ENCODE measurements at regions of chr10 and their contacts with region 1.

Region 1: DNA sequence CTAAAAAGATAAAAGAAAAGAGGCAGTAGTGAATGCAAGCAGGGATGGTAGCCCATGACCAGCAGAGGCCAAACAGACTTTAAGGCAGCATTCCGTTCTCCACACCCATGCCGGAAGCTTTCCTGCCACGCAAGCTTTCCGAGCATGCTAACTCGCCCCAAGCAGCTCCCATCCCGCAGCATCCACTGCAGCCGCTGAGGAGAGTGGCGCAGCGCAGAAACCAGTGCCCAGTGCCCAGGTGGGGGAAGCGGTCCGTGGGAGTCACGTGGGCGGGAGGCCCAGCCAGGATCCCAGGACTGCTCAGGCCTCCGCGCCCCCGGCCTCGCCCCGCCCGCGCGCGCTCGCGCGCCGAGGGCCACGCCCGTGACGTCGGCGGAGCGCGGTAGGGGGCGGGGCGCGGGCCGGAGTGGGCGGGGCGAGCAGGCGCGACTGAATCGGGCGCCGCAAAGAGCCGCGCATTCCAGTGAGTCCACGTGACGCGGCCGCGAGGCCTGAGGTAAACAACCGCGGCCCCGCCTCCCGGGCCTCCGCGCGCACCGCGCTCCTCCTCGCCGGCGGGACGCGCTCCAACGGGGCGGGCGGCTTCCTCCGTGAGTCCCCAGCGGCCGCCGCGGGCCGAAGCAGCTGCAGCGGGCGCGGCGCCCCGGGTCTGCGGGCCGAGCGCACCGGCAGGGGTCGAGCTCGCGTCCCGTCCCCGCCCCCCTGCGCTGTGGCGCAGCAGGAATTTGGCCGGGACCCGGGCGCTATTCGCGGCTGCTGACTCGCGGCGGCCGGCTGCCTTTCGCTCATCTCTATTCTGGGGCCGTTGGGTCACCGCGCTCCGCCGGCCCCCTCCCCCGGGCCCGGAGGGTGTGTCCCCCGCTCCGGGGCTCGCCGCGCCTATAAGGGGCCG is at the start of gene OTUD1:
- DNase-seq: peak; percentile 96
- ATAC-seq: peak; percentile 88
- H3K4me3 Mint-ChIP-seq: peak within 1 kb of the TSS; percentile 85
- H3K27ac Mint-ChIP-seq: peak within 1 kb of the TSS; percentile 91
- H3K4me1 Mint-ChIP-seq: peaks cover 28% of the 10 kb centered on the region
- H3K27me3 Mint-ChIP-seq: no peaks in the 10 kb centered on the region
- total RNA-seq, gene OTUD1: 5.7 to 6.5 TPM

Region 2: GRCh38 chr10:22228943-22229801 is 1209.6 kb before region 1 on chr10:
- CTCF ChIA-PET with region 1: interaction called, 3 read pairs
- POLR2A ChIA-PET with region 1: no interaction called
- intact Hi-C with region 1: loop called in 1 of 2 experiments (anchors 10 kb)
- DNase-seq: peak; percentile 92
- ATAC-seq: peak; percentile 75
- H3K4me3 Mint-ChIP-seq: peak overlapping the region; percentile 89
- H3K27ac Mint-ChIP-seq: peak overlapping the region; percentile 90
- H3K4me1 Mint-ChIP-seq: peaks cover 20% of the 10 kb centered on the region
- H3K27me3 Mint-ChIP-seq: no peaks in the 10 kb centered on the region

Region 3: DNA sequence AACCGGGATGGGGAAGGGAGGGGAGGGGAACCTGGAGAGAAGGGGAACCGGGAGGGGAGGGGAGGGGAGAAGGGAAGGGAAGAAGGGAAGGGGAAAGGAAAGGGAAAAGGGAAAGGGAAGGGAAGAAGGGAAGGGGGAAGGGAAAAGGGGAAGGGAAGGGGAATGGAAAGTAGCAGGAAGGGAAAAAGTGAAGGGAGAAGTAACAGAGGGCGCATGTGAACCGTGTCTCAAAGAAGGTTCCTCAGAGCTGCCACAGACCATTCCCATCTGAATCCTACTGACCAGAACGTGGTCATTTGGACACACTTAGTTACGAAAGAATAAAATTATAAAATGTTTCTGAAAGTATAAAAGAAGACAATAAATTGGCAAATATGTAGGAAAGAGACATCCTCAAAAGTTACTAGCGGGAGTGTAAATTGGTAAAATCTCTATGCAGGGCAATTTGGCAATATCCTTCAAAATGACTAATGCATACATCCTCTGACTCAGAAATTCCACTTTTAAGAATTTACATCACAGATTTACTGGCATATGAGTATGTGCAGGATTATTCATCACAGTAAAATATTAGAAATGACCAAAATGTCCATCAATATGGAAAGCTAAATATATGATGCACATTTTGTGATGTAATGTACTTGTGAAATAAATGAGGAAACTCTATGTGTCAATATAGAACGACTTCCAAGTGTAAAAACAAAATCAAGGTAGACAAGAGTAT is 107.1 kb before region 1 on chr10:
- CTCF ChIA-PET with region 1: no interaction called
- POLR2A ChIA-PET with region 1: no interaction called
- intact Hi-C with region 1: loop called in 1 of 2 experiments (anchors 2 kb)
- DNase-seq: no peak
- ATAC-seq: peak; percentile 36
- H3K4me3 Mint-ChIP-seq: no peak overlapping the region
- H3K27ac Mint-ChIP-seq: peak overlapping the region; percentile 48
- H3K4me1 Mint-ChIP-seq: peaks cover 39% of the 10 kb centered on the region
- H3K27me3 Mint-ChIP-seq: no peaks in the 10 kb centered on the region

Region 4: GRCh38 chr10:23413629-23414089 is 25.1 kb before region 1 on chr10:
- CTCF ChIA-PET with region 1: interaction called, 3 read pairs
- POLR2A ChIA-PET with region 1: no interaction called
- intact Hi-C with region 1: loop called in 1 of 2 experiments (anchors 2 kb)
- DNase-seq: no peak
- ATAC-seq: no peak
- H3K4me3 Mint-ChIP-seq: no peak overlapping the region
- H3K27ac Mint-ChIP-seq: no peak overlapping the region
- H3K4me1 Mint-ChIP-seq: peaks cover 23% of the 10 kb centered on the region
- H3K27me3 Mint-ChIP-seq: peaks cover 2% of the 10 kb centered on the region

Region 5: DNA sequence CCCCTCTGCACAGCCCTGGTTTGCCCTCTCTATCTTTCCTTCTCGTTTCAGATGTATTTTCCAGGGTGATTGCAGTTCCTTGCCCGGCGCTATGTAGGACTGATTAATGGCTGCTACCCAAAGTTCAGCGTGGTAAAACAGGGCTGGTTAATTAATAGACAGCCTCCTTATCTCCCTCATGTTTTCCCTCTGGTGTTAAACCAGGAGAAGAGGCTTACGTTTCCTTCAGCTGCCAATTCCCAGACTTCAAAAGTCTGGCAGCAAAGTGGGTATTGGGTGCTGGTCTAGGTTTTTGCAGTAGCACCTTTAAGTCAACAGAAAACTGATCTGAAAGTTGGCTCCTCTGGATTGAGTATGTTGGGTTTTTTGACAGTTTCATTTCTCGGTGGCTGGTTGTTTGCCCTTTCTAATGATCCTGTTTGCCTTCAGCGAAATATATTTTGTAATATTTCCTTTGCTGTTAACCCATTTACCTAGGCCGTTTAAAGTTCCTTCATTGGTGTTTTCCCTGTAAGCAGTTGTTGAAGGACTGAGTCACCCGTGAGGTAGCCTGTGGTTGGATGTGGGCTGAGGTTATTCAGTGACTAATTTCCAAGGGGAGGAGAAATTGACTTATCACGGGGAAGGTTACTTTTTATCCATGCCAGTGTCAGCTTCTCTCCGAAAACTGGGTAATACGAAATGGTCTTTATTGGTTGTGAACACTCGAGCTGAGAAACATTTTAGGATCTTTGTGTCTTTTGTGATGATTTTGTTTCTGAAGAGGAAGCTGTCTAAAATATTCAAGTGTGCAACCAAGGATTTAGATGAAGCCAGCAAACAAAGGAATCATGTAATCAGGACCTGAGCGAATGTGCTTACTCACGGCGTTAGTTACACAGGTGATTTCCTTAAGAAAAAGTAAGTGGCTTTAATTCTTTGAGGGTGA is 1027.4 kb after region 1 on chr10:
- CTCF ChIA-PET with region 1: no interaction called
- POLR2A ChIA-PET with region 1: no interaction called
- intact Hi-C with region 1: loop called in 1 of 2 experiments (anchors 10 kb)
- DNase-seq: peak; percentile 80
- ATAC-seq: peak; percentile 79
- H3K4me3 Mint-ChIP-seq: no peak overlapping the region
- H3K27ac Mint-ChIP-seq: no peak overlapping the region
- H3K4me1 Mint-ChIP-seq: peaks cover 37% of the 10 kb centered on the region
- H3K27me3 Mint-ChIP-seq: peaks cover 18% of the 10 kb centered on the region